ENCODE measurements at regions of chr11 and their contacts with region 1.

Region 1: DNA sequence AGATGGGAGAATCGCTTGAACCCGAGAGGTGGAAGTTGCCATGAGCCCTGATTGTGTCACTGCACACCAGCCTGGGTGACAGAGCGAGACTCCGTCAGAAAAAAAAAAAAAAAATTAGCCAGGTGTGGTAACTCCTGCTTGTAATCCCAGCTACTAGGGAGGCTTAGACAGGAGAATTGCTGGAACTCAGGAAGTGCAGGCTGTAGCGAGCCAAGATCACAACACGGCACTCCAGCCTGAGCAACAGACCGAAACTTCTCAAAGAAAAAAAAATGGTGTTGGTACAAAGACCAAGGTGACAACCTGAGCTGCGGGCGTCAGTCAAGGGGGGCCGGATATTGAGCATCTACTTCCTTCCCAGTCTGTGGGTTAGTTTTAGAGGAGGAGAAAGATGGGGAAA is 48.4 kb upstream of the HSPA8 start:
- DNase-seq: no peak
- H3K4me3 ChIP-seq: no peak overlapping the region
- H3K27ac ChIP-seq: no peak overlapping the region
- H3K4me1 ChIP-seq: no peaks in the 10 kb centered on the region
- H3K27me3 ChIP-seq: no peaks in the 10 kb centered on the region
- CTCF ChIP-seq: no peak
- EP300 ChIP-seq: no peak
- POLR2A ChIP-seq: no peak
- RAD21 ChIP-seq: no peak

Region 2: DNA sequence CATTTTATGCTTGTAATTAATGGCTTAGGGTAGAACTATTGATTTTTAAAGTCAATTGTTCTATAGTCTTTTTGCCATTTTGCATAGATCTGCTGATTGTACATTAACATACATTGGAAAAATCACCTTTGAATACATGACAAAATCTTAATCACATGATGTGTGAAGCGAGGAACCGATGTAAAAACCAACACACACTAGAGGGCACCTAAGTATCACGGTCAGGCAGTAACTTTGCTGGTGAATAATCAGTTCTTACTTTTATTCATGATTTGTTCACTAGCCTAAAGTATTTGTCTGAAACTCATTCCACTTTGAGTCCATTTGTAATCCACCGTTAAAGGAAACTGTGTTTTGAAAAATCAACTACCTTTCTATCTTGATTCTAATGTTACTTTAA is 199.6 kb before region 1 on chr11:
- CTCF ChIA-PET with region 1: no interaction called
- POLR2A ChIA-PET with region 1: no interaction called
- DNase-seq: no peak
- H3K4me3 ChIP-seq: no peak overlapping the region
- H3K27ac ChIP-seq: no peak overlapping the region
- H3K4me1 ChIP-seq: no peaks in the 10 kb centered on the region
- H3K27me3 ChIP-seq: no peaks in the 10 kb centered on the region
- CTCF ChIP-seq: peak in 2 of 3 experiments; percentile 61 to 65; a peak in 3 of 4 replicates
- EP300 ChIP-seq: no peak
- POLR2A ChIP-seq: no peak
- RAD21 ChIP-seq: peak; percentile 87

Region 3: DNA sequence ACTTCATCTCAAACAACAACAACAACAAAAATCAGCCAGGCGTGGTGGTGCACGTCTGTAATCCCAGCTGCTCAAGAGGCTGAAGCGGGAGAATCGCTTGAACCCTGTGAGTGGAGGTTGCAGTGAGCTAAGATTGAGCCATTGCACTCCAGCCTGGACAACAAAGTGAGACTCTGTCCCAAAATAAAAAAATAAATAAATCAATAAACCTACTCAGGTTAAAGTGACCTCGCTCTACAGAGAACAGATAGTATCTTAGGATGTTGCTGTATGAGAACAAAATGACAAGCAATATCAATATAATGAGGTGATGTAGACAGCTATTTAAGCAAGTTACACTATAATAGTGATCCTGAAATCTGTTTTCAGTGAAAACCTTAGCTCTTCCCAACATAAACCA is 14.0 kb before region 1 on chr11:
- CTCF ChIA-PET with region 1: interaction called, 30 read pairs
- POLR2A ChIA-PET with region 1: no interaction called
- DNase-seq: no peak
- H3K4me3 ChIP-seq: no peak overlapping the region
- H3K27ac ChIP-seq: no peak overlapping the region
- H3K4me1 ChIP-seq: peaks cover 0 to 5% (median 1%) of the 10 kb centered on the region in 4 experiments; a peak in 3 of 7 replicates
- H3K27me3 ChIP-seq: no peaks in the 10 kb centered on the region
- CTCF ChIP-seq: no peak
- EP300 ChIP-seq: no peak
- POLR2A ChIP-seq: no peak
- RAD21 ChIP-seq: no peak

Region 4: DNA sequence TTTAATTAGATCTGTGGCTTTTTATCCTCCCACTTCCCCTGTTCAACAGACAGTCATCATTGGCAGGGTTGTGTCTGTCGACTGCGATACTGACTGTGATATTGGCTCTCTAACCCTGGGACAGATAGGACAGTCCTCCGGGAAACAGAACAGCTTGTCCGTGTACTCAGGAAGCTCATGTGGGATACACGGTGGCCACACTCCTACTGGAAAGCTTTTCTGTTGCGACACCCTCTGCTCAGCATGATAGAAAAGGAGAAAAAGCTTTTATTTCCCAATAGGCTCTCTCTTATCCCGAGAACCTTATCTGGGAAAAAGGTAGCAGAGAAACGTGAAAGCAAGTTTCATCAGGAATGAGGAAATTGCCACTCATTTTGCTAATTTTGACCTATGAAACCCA is 12.0 kb after region 1 on chr11:
- CTCF ChIA-PET with region 1: interaction called, 19 read pairs
- POLR2A ChIA-PET with region 1: no interaction called
- DNase-seq: no peak
- H3K4me3 ChIP-seq: no peak overlapping the region
- H3K27ac ChIP-seq: no peak overlapping the region
- H3K4me1 ChIP-seq: no peaks in the 10 kb centered on the region; a peak in 1 of 7 replicates
- H3K27me3 ChIP-seq: no peaks in the 10 kb centered on the region
- CTCF ChIP-seq: no peak
- EP300 ChIP-seq: no peak
- POLR2A ChIP-seq: no peak
- RAD21 ChIP-seq: no peak

Region 5: DNA sequence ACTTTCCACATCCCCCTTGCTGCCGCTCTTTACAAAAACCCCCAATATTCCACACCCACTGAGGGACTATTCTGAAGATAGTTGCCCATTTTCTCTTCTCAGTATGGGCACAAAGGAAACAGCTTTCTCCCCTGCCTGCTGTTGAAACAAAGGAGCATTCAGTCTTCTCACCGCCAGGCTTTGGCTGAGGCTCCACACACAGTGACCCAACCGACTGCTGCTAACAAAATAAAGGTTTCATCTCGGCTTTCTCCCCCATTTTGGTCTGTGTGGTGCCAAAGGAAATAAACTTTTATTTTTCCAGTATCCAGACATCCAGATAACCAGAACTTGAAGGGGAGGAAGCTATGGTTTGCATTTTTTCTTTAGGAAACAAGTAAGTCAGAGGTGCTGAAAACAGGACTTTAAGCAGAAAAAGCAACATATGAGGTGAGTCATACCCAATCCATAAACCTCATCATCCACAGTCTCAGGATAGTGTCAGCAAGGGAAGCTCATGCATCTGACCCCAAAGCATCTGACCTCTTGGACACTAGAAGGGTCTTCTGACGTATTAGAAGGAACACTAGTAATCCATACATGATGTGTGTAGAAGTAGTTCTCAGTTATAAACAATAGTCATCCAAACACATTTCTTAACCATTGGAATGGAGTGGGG is 78.3 kb after region 1 on chr11:
- CTCF ChIA-PET with region 1: interaction called, 13 read pairs
- POLR2A ChIA-PET with region 1: no interaction called
- DNase-seq: no peak
- H3K4me3 ChIP-seq: peak overlapping the region in 1 of 4 experiments; percentile 23; a peak in 1 of 8 replicates
- H3K27ac ChIP-seq: no peak overlapping the region; the same call in 1 of the 2 replicates
- H3K4me1 ChIP-seq: peaks cover 11 to 41% (median 17%) of the 10 kb centered on the region in 4 experiments
- H3K27me3 ChIP-seq: no peaks in the 10 kb centered on the region; a peak in 1 of 7 replicates
- CTCF ChIP-seq: peak in 1 of 3 experiments; percentile 23; a peak in 1 of 4 replicates
- EP300 ChIP-seq: no peak
- POLR2A ChIP-seq: no peak
- RAD21 ChIP-seq: no peak

Region 6: DNA sequence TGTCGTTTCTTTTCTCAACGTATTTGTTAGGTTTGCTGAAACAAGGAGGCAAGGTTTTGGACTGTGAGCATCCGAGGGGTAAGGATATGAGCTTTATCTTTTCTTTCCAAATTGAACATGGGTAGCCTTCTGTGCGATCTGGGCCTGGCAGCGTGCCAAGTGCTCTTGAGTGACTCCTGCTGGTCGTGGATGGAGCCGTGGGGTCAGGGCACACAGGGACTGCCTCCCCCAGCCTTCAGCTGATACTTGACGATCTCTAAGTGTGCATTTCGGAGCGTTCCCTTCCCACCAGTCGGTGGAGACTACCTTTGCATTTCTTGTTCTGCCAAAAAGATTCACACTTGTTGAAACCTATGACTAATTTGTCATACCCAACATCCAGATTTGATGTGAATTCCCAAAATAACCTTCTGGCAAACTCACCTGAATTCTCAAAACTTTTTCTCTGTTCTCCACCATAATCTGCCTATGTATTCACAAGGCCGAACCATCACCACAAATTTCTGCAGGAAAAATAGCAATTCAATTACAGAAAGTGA is 124.8 kb after region 1 on chr11:
- CTCF ChIA-PET with region 1: interaction called, 18 read pairs
- POLR2A ChIA-PET with region 1: no interaction called
- DNase-seq: peak in 1 of 2 experiments; percentile 89
- H3K4me3 ChIP-seq: no peak overlapping the region
- H3K27ac ChIP-seq: no peak overlapping the region
- H3K4me1 ChIP-seq: no peaks in the 10 kb centered on the region
- H3K27me3 ChIP-seq: no peaks in the 10 kb centered on the region
- CTCF ChIP-seq: peak; percentile 79 to 96 (median 92)
- EP300 ChIP-seq: no peak
- POLR2A ChIP-seq: no peak
- RAD21 ChIP-seq: peak; percentile 58 to 74